ENCODE measurements at regions of chr2 and their contacts with region 1.

Region 1: GRCh38 chr2:60560734-60561644 is 7.5 kb upstream of the BCL11A start:
- DNase-seq: peak; percentile 70
- ATAC-seq: peak; percentile 74
- H3K4me3 ChIP-seq: no peak overlapping the region
- H3K27ac ChIP-seq: no peak overlapping the region
- H3K4me1 ChIP-seq: no peaks in the 10 kb centered on the region
- H3K27me3 ChIP-seq: peaks cover 75% of the 10 kb centered on the region
- CTCF ChIP-seq: peak; percentile 75

Region 2: DNA sequence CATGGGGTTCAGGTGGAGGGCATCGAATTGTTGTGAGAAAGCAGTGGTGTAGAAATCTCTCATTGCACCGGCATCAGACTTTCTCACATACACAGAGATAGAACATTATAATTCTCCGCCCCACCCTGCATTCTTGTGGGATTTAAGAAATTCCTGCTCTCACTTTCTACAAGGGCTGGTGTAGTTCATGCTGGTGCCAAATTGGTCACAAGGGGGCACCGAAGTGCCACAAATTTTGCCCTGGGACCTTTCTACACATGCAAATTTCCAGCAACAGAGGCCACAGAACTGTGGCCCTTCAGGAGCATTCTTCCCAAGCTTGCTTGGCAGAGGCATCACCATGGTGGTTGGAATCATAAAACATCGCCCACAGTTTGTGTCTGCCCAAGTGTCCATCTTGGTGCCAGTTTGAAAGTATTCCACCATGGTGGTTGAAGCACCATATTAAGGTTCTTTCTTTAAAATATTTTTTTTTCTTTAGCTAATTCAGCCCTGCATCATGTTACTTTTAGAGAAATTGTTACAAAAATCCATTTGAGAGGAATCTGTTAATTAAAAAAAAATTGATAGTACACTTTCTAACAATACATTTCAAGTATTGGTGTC is 1798.7 kb before region 1 on chr2:
- CTCF ChIA-PET with region 1: no interaction called
- POLR2A ChIA-PET with region 1: no interaction called
- intact Hi-C with region 1: loop called (anchors 5 kb)
- DNase-seq: peak; percentile 86
- ATAC-seq: peak; percentile 96
- H3K4me3 ChIP-seq: no peak overlapping the region
- H3K27ac ChIP-seq: no peak overlapping the region
- H3K4me1 ChIP-seq: 0 out of 2 replicates have a peak, but pooled peaks cover 3% of the 10 kb centered on the region
- H3K27me3 ChIP-seq: peaks cover 53% of the 10 kb centered on the region
- CTCF ChIP-seq: peak; percentile 89

Region 3: DNA sequence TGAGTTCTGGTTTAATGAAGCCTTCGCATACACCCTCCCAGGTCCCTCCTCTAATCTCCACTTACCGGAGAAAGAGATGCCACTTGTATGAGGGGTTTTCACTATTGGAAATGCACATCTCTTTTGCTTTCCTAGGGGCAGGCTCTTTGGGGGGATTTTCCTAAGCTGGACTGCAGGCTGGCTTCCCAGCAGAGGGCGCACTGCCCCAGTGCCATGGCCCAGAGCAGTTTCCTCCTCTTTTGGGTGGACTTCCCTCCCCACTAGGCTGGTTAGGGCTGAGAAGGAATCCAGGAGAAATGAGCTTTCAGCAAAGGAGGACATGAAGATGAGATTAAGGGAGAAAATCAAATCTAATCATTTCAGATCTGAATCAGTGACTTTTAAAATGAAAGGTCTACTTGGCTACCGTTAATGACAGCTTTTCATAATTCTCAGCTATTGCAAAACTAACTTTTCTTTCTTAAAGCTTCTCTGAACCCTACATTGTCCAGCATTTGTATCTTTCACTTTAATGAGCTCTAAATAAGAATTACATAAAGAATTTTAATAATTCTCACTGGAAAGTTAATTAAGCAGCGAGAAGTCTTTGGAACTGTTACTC is 1535.7 kb before region 1 on chr2:
- CTCF ChIA-PET with region 1: no interaction called
- POLR2A ChIA-PET with region 1: no interaction called
- intact Hi-C with region 1: loop called (anchors 2 kb)
- DNase-seq: peak; percentile 37
- ATAC-seq: peak; percentile 70
- H3K4me3 ChIP-seq: no peak overlapping the region
- H3K27ac ChIP-seq: no peak overlapping the region
- H3K4me1 ChIP-seq: no peaks in the 10 kb centered on the region
- H3K27me3 ChIP-seq: peaks cover 34% of the 10 kb centered on the region
- CTCF ChIP-seq: peak; percentile 94

Region 4: DNA sequence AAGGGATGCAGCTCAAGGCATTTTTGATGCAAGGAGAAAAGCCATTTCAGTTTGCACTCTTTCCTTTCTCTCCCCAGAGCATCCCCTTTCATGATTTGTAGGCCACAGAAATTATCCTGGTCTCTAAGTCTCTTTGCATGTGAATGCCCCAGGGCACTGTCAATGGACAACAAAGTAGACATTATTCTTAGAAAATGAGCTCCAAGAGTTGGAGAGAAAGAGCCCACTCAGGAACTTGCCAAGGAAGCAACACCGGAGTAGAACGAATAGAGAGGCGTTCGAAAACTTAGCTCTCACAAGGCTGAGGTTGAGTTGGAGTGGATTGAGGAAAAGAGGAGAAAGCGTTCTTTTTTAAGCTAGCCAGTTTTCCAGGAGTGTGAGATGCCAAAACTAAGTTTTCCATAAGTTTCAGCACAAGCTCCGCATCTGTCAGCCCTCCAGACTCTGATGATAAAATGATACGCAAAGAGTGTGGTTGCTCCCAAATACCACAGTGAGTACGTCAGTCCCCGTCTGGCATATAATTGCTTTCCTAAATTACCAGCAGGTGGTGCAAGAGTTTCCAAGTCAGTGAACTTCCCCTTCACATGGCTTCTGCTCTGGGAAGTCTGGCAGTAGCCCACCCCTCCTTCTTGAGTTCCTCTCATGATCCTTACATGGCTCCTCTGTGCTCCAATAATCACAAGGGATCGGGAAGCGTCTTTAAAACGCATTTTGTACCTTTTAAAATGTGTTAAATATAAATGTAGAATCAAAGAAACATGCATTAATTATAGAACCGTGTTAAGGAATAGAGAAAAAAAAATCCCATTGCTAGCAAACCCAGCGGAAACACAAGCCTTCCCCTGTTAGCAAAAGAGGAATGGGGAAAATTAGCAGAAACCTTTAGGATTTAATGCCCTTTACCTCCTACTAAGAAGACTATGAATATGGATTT is 1259.3 kb before region 1 on chr2:
- CTCF ChIA-PET with region 1: no interaction called
- POLR2A ChIA-PET with region 1: no interaction called
- intact Hi-C with region 1: loop called (anchors 5 kb)
- DNase-seq: peak; percentile 79
- ATAC-seq: peak; percentile 77
- H3K4me3 ChIP-seq: no peak overlapping the region
- H3K27ac ChIP-seq: no peak overlapping the region
- H3K4me1 ChIP-seq: no peaks in the 10 kb centered on the region
- H3K27me3 ChIP-seq: peaks cover 33% of the 10 kb centered on the region
- CTCF ChIP-seq: peak; percentile 71

Region 5: DNA sequence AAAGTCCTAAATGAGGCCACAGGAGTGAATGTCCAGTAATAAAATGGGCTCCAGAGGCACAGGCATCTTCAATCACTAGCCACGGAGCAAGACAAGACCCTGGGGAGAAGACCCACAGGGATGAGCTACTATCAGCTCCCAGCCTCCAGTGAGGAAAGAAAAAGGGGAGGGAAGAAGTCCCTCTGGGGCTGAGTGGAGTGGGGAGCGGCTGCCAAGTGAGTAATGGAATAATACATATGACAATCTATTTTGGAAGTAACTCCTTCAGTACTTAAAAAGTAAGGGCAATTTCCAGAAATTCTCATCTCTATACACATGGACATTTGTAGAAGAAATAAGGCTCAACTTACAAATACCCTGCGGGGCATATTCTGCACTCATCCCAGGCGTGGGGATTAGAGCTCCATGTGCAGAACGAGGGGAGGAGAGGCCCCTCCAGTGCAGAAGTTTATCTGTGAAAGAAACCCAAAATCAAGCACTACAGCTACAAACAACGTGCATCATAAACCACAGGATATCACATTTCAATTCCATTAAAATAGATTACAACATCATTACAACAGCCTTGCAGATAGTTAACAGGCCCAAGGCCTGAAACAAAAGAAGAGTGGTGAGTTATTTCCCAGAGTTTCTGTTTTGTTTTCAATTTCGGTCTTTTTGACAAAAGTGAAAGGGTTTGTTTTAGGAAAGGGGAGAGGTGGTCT is 92.5 kb before region 1 on chr2:
- CTCF ChIA-PET with region 1: no interaction called
- POLR2A ChIA-PET with region 1: no interaction called
- intact Hi-C with region 1: no loop called
- DNase-seq: peak; percentile 49
- ATAC-seq: peak; percentile 43; the same call in 1 of the 2 replicates
- H3K4me3 ChIP-seq: no peak overlapping the region
- H3K27ac ChIP-seq: no peak overlapping the region
- H3K4me1 ChIP-seq: peaks cover 10% of the 10 kb centered on the region
- H3K27me3 ChIP-seq: no peaks in the 10 kb centered on the region
- CTCF ChIP-seq: no peak

Region 6: DNA sequence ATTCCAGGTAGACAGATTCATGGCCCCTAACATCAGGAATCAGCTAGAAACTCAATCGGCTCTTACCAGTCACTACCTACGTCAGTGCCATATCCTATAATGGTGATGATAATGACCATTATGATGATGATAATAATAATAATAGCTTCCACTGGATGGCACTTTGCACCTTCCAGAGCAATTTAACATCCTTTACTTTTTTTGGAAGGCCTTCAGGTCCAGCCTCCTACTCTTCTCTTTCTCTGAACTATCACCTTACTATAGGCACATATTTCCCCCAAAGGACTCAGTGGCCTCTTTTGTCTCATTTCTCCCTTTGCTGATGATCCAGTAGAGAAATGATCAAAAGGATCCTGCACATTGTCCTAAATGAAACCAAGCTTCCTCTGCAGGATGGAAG is 63.5 kb before region 1 on chr2:
- CTCF ChIA-PET with region 1: no interaction called
- POLR2A ChIA-PET with region 1: no interaction called
- intact Hi-C with region 1: loop called (anchors 1 kb)
- DNase-seq: no peak
- ATAC-seq: 0 out of 2 replicates have a peak, but pooled peaks have one; percentile 38
- H3K4me3 ChIP-seq: no peak overlapping the region
- H3K27ac ChIP-seq: no peak overlapping the region
- H3K4me1 ChIP-seq: no peaks in the 10 kb centered on the region
- H3K27me3 ChIP-seq: no peaks in the 10 kb centered on the region
- CTCF ChIP-seq: no peak; the same call in 1 of the 2 replicates

Region 7: DNA sequence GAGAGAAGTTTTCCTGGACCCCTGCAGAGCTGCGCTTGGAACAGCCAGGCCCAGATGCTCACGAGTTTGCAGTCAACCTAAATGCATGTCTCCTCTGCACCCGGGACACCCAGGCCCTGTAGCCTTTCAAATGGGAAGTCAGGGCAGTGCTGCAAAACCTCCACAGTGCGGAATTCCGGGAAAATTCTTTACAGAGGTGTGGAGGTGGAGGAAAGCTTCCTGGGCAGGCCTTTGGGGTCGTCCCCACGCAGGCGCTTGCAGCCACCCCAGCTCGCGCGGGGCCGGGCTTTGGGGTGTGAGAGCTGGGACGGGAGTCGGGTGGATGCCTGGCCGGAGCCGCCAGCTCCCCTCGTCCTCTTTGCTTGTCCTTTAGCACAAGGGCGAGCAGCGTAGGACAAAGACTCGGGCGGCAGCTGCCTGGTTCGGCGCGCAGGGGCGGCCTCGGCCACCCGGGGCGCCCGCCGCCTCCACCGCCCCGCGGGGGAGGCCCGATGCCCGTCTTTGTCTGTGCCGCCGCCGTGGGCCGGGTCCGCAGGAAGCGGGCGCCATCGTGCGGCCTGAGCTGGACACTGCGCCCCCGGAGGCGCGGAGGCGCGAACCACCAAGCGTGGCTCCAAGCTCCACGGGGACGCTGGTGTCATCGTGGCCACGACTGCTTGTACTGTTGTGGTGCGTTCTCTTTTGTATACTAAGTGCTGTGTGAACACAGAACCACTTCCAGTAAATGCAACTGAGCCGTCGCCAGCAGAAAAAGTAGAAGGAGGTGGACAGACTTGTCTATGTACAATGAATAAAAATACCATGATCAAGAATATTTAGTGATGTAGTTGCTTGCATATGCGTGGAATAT is 20.7 kb after region 1 on chr2:
- CTCF ChIA-PET with region 1: interaction called, 12 read pairs
- POLR2A ChIA-PET with region 1: no interaction called
- intact Hi-C with region 1: no loop called
- DNase-seq: peak; percentile 73
- ATAC-seq: peak; percentile 97
- H3K4me3 ChIP-seq: peak overlapping the region; percentile 64
- H3K27ac ChIP-seq: no peak overlapping the region
- H3K4me1 ChIP-seq: peaks cover 3% of the 10 kb centered on the region; the same call in 1 of the 2 replicates
- H3K27me3 ChIP-seq: peaks cover 75% of the 10 kb centered on the region
- CTCF ChIP-seq: peak; percentile 93

Measured in PC-3 (cell line).